GM13977 (cell line): ENCODE measurements at regions of chr19 and their contacts with region 1.

Region 1: GRCh38 chr19:40305403-40305802 is 20.3 kb upstream of the AKT2 start:
- DNase-seq: peak; percentile 88
- CTCF ChIP-seq: peak; percentile 80

Region 2: GRCh38 chr19:40603389-40604135 is 298.2 kb after region 1 on chr19:
- in situ Hi-C with region 1: loop called (anchors 25 kb)
- DNase-seq: peak; percentile 97
- CTCF ChIP-seq: no peak